Head of caudate nucleus (tissue), 42 donors: ENCODE measurements at regions of chr7 and their contacts with region 1.

Region 1: GRCh38 chr7:45917658-45918057 is 3.4 kb downstream of the IGFBP3 start:
- DNase-seq: peak; percentile 66 to 94 (median 86)

Region 2: GRCh38 chr7:45646996-45647825 is 270.4 kb before region 1 on chr7:
- intact Hi-C with region 1: no loop called
- DNase-seq: peak in 4 of 42 donors; percentile 16 to 49 (median 32)

Region 3: DNA sequence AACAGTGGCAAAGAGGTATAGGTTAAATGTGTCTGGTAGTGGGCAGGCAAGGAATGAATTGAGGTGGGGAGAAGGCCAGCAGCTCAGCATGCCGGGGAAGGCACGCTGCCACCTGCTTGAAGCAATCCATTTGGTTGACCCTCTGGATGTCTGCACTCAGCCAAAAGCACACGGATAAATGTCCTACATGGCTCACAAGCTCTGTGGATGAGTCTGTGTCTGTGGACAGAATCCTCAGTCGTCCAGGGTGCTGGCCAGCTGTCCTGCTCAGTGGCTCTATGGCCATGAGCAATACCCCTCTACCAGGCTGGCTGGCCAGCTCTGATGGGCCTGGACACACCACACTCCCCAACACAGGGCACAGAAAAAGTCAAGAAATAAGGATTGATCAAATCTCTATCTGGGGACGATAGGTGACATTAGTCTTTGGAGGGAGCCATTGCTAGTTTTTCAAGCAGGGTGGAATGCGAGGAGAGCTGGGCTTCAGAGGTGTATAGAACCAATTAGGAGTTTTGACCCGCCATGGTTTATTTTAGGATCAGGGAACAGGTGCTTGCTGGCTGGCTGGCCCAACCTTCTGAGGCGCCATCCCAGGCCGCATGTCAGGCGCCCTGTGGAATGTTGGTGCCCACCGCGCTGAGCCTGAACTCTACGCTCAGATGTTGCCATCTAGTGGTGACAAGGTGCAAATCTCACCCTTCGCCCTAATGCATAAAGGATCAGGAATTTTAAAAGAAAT is 1170.8 kb after region 1 on chr7:
- intact Hi-C with region 1: loop called (anchors 5 kb)
- DNase-seq: peak; percentile 30 to 86 (median 62)

Region 4: GRCh38 chr7:47179812-47180515 is 1262.3 kb after region 1 on chr7:
- intact Hi-C with region 1: loop called (anchors 10 kb)
- DNase-seq: peak in 36 of 42 donors; percentile 26 to 78 (median 56)